ENCODE measurements at regions of chr9 and their contacts with region 1.

Region 1: GRCh38 chr9:131178382-131178781 is 53.0 kb downstream of the NUP214 start:
- DNase-seq: no peak
- H3K4me3 ChIP-seq: no peak overlapping the region
- CTCF ChIP-seq: peak; percentile 91

Region 2: DNA sequence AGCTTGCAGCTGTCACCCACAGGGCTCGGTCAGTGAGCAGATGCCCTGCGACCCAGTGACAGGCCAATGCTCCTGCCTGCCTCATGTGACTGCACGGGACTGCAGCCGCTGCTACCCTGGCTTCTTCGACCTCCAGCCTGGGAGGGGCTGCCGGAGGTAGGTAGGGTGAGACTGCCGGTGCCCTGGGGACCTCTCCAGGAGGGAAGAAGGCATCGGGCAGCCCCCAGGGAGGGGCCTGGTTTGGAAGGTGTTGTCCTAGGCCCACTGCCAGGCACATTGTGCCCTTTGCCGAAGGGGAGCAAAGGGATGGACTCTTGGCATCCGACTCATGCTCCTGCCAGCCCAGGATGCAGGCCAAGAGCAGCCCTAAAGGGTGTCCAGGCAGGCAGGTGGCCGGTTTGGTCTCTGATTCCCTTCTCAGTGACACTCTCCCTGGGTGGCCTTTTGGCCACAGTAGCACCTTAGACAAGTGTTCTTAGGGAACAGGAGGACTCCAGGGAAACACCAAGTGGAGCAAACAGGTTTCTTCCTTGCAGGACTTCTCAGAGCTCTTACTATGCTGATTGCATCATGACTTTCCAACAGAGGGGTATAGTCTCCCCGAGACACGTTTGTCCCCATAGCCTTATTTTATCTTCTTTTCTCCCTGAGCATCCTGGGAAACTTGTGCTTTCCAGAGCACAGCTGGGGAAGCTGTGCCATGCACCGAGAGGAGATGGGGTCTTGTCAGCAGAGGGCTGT is 110.1 kb before region 1 on chr9:
- CTCF ChIA-PET with region 1: no interaction called
- POLR2A ChIA-PET with region 1: no interaction called
- DNase-seq: no peak
- H3K4me3 ChIP-seq: no peak overlapping the region
- CTCF ChIP-seq: no peak

Region 3: DNA sequence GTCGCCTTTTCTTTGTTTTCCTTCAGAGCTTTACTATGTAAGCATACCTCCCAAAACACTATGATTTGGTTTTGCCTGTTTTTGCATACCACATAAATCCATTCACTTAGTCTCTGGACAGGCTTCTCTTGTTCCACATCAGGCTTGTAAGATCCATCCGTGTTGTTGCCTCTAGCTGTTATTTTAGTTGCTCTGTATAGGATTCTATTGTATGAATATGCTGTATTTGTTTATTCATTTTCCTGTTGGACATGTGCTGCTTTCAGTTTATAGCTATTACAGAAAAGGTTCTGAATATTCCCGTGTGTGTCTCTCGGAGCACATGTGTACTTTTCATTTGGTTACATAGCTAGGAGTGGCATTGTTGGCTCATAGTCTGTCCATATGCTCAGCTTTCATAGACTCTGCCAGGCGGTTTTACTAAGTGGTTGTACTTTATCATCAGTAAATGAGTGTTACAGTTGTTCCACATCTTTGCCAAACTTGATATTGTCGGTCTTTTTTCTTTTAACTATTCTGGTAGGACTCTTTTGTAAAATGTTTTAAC is 11.2 kb before region 1 on chr9:
- CTCF ChIA-PET with region 1: interaction called, 66 read pairs
- POLR2A ChIA-PET with region 1: no interaction called
- DNase-seq: no peak
- H3K4me3 ChIP-seq: no peak overlapping the region
- CTCF ChIP-seq: no peak

Region 4: DNA sequence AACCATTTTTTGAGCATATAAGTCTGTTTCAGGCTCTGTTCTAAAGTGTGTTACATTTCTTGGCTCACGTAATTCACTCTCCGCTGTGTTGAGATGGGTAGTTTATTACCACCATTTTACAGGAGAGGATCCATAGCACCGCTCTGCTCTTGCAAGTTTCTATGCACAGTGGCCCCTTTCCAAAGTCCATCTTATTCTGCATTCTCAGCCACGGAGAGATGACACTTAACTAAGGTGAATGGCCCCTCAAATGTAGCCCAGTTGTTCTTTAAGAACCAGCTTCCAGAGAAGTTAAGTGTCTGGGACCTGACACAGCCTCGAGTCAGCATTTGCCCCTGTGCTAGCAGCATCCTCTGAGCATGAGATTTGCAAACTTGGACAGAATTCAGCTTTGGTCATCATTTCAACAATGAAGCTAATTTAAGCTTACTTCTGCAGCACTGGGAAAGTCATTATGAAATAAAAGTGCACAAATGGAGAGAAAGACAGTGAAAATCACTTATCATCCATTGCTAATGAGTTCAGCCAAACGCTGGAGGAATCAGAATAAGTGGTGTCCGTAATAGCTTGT is 36.0 kb after region 1 on chr9:
- CTCF ChIA-PET with region 1: interaction called, 12 read pairs
- POLR2A ChIA-PET with region 1: no interaction called
- DNase-seq: no peak
- H3K4me3 ChIP-seq: no peak overlapping the region
- CTCF ChIP-seq: no peak

Measured in AG04449 (cell line).